ENCODE measurements at regions of chr15 and their contacts with region 1.

Region 1: DNA sequence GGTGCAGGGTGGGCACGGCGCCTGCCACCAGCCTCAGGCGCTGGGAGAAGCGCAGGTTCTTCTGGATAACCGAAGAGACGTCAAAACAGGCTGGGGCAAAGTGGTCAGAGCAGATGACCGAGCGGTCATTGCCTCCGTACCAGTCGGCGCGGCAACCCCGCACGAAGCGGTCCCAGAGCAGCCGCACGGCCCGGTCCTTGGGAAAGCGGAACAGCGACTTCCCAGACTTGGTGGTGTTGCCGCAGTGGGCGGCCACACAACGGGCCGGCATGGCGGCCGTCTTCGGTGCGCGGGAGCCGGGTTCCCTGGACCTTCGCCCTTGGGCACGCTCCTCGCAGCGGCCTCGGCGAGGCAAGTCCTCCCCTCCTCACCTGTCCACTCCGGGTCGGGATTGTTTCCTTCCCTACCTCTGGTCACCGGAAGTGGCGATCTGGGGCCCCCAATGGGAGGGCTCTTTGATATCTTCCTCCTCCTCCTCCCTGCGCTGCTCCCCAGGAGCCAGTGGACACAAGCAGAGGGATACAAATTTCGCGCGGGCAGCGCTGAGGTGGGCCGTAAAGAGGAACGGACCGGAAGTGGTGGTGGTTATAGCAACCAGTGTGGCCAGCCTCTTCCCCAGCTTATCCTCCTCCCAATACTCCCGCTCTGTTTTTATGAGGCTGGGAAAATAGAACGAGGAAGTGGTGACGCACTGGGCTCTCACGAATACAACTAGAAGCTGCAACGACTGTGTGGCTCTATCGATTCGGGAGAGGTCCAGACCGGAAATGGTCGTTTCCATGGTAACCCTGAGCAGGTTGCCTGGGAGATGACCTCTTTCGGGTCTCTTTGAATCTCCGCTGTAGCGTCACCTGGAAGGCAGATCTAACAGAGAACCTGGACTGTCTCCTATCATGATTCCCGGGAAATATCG is at the starts of genes LRRC49 and THAP10:
- DNase-seq: peak; percentile 98
- ATAC-seq: peak; percentile 95
- H3K4me3 ChIP-seq: peak within 1 kb of the TSS; percentile 66
- H3K27ac ChIP-seq: peak within 1 kb of the TSS; percentile 64
- H3K4me1 ChIP-seq: peaks cover 6% of the 10 kb centered on the region; the same call in 1 of the 2 replicates
- H3K27me3 ChIP-seq: no peaks in the 10 kb centered on the region
- CTCF ChIP-seq: no peak
- POLR2A ChIP-seq: peak; percentile 52; the same call in 1 of the 2 replicates
- RAD21 ChIP-seq: no peak; the same call in 1 of the 2 replicates
- total RNA-seq, gene LRRC49: 16.8 and 19.2 TPM in 2 replicates
- total RNA-seq, gene THAP10: 2.3 and 3.6 TPM in 2 replicates

Region 2: DNA sequence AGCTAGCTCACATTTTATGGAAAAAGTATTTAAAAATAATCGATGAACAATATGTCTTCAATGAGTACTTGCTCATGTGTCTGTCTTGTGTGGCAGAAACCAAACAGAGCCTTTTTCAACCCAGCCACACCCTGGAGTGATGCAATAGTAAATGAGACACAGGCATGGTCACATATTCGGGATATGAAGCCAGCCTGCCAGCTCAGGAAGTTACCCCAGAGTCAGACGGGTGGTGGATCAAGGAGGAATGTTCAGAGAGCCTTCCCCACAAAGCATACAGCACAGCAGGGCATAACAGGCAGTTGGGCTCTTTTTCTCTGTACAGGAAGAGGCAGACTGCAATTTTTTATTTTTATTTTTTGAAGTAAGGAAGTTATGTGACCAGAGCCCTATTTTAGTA is 65.6 kb before region 1 on chr15:
- CTCF ChIA-PET with region 1: no interaction called
- POLR2A ChIA-PET with region 1: no interaction called
- dilution Hi-C with region 1: no loop called
- in situ Hi-C with region 1: no loop called
- intact Hi-C with region 1: loop called (anchors 5 kb)
- DNase-seq: peak; percentile 74
- ATAC-seq: peak; percentile 80
- H3K4me3 ChIP-seq: no peak overlapping the region
- H3K27ac ChIP-seq: no peak overlapping the region
- H3K4me1 ChIP-seq: peaks cover 2% of the 10 kb centered on the region
- H3K27me3 ChIP-seq: no peaks in the 10 kb centered on the region
- CTCF ChIP-seq: no peak
- POLR2A ChIP-seq: no peak
- RAD21 ChIP-seq: no peak

Region 3: DNA sequence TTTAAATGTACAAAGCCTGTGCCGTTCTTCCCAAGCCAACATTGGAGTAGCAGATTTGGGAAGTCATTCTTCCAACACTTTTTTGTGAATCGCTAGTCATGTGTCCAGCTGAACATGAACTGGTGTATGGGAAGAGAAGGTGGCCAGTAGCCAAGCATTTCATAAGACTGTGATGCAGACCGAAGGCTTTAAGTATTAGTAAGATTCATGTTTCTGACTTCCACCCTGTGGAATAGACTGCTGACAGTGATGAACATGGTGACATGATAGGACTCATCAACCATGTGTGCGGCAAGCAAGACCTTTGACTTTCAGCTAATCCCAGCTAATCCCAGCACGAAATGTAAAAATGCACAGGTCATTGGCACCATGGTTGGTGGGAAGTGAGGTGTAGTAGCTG is 174.7 kb after region 1 on chr15:
- CTCF ChIA-PET with region 1: no interaction called
- POLR2A ChIA-PET with region 1: no interaction called
- dilution Hi-C with region 1: no loop called
- in situ Hi-C with region 1: no loop called
- intact Hi-C with region 1: no loop called
- DNase-seq: peak; percentile 99
- ATAC-seq: peak; percentile 79
- H3K4me3 ChIP-seq: no peak overlapping the region
- H3K27ac ChIP-seq: peak overlapping the region; percentile 33; the same call in 1 of the 2 replicates
- H3K4me1 ChIP-seq: peaks cover 6% of the 10 kb centered on the region; the same call in 1 of the 2 replicates
- H3K27me3 ChIP-seq: no peaks in the 10 kb centered on the region
- CTCF ChIP-seq: no peak
- POLR2A ChIP-seq: no peak
- RAD21 ChIP-seq: no peak

Region 4: DNA sequence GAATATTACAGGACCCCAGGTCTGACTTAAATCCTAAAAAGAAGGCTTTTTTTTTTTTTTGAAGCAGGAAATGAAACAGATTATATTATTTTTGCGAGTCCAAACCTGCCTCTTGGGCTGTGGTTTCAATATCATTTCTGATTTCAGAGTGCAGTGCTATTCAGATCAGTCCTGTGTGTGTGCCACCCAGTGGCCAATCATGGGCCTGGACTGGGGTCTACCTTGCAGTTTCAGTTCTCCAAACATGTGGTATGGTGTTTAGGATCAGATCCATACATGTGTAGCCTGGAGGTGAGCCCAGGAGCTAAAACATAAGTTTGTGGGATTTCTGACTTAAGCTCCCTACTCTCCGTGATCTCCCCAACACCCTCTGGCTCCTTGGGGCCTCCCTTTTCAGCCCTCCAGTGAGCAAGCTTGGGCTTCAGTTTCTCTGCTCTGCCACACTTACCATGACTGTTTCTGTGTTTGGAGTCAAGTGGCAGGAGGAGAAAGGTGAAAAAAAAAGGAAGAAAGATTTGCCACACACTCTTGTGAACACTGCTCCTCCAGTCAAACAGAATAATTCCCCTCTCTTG is 210.9 kb after region 1 on chr15:
- CTCF ChIA-PET with region 1: no interaction called
- POLR2A ChIA-PET with region 1: no interaction called
- dilution Hi-C with region 1: no loop called
- in situ Hi-C with region 1: loop called (anchors 10 kb)
- intact Hi-C with region 1: loop called (anchors 5 kb)
- DNase-seq: peak; percentile 68
- ATAC-seq: peak; percentile 99
- H3K4me3 ChIP-seq: no peak overlapping the region
- H3K27ac ChIP-seq: no peak overlapping the region
- H3K4me1 ChIP-seq: peaks cover 3% of the 10 kb centered on the region; the same call in 1 of the 2 replicates
- H3K27me3 ChIP-seq: no peaks in the 10 kb centered on the region
- CTCF ChIP-seq: peak; percentile 63
- POLR2A ChIP-seq: no peak
- RAD21 ChIP-seq: peak; percentile 67

Measured in IMR-90 (cell line).